ENCODE measurements at regions of chr4 and their contacts with region 1.

Region 1: GRCh38 chr4:73864365-73864764 is 4.8 kb upstream of the CXCL1 start:
- DNase-seq: peak; percentile 32
- H3K4me3 ChIP-seq: no peak overlapping the region
- H3K4me3 Mint-ChIP-seq: no peak overlapping the region
- H3K27ac Mint-ChIP-seq: no peak overlapping the region
- H3K4me1 ChIP-seq: no peaks in the 10 kb centered on the region; the same call in 1 of the 2 replicates
- H3K4me1 Mint-ChIP-seq: no peaks in the 10 kb centered on the region
- H3K27me3 ChIP-seq: no peaks in the 10 kb centered on the region
- H3K27me3 Mint-ChIP-seq: peaks cover 8% of the 10 kb centered on the region
- CTCF ChIP-seq: peak; percentile 52 to 69

Region 2: GRCh38 chr4:73648478-73648877 is 215.9 kb before region 1 on chr4:
- CTCF ChIA-PET with region 1: no interaction called
- POLR2A ChIA-PET with region 1: no interaction called
- intact Hi-C with region 1: no loop called
- DNase-seq: no peak
- H3K4me3 ChIP-seq: no peak overlapping the region
- H3K4me3 Mint-ChIP-seq: no peak overlapping the region
- H3K27ac Mint-ChIP-seq: no peak overlapping the region
- H3K4me1 ChIP-seq: no peaks in the 10 kb centered on the region
- H3K4me1 Mint-ChIP-seq: no peaks in the 10 kb centered on the region
- H3K27me3 ChIP-seq: no peaks in the 10 kb centered on the region
- H3K27me3 Mint-ChIP-seq: no peaks in the 10 kb centered on the region
- CTCF ChIP-seq: no peak

Region 3: DNA sequence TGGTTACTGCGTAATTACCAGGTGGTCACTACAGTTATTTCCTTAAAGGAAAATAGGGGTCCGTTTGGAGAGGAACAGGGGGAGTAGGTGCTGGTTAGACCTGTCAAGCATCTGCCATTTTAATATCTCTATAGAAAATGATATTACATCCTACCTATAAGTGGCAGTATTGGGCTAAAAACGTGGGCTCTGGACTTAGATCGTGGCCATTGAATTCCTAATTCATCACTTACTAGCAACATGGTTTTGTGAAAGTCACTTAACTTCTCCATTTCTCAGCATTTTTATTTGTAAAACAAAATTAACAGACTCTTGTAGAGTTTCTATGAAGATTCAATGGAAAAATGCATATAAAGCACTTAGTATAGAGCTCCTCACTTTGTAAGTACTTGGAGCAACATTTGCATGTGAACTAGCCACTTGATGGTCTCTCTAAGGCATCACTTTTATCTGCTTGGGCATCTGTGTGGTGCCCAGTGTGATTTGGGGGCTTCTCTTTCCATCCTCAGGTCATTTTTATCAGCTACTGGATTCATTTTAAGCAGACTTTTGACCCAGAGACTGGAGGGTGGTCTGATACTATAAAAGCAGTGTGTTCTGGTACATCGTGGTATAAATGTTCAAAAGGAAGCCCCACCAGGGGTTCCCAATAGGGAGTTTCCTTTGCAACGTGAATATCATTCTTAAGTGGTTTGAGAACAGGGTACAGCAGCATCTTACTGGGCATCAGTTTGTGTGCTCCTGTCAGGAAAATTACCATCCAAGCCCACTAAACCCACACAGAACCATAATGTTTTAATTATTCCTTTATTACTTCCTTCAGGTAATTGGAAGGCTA is 201.4 kb before region 1 on chr4:
- CTCF ChIA-PET with region 1: interaction called, 3 read pairs
- POLR2A ChIA-PET with region 1: no interaction called
- intact Hi-C with region 1: loop called (anchors 1 kb)
- DNase-seq: no peak
- H3K4me3 ChIP-seq: no peak overlapping the region
- H3K4me3 Mint-ChIP-seq: no peak overlapping the region
- H3K27ac Mint-ChIP-seq: no peak overlapping the region
- H3K4me1 ChIP-seq: no peaks in the 10 kb centered on the region
- H3K4me1 Mint-ChIP-seq: no peaks in the 10 kb centered on the region
- H3K27me3 ChIP-seq: no peaks in the 10 kb centered on the region
- H3K27me3 Mint-ChIP-seq: no peaks in the 10 kb centered on the region
- CTCF ChIP-seq: peak in 1 of 2 experiments; percentile 19

Region 4: DNA sequence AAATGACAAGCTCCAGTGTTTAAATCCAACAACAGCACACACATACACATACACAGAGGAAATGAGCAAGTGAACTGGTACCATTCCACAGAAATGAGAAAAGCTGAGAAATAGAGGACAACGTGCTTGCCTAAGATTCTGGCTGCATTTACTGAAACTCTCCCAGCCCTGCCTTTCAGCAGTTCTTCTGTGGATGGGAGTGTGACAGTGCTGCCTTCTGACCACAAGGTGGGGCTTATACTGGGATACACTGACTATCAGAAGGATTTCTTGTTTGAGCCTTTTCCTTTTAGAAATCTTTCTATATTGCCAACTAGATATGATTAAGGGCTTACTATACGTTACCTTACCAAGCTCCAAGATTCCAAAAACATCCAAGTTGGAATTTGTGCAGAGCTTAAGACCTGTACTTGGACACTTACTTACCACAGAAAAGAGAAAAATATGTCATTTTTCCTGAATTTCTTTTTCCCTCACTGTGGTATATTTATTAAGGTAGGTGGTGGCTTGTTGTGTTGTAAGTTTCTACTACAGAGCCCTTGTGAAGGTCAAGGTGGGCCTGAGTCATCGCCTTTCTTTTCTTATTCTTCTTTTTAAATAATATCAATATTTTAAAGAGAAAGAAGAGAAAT is 134.7 kb before region 1 on chr4:
- CTCF ChIA-PET with region 1: interaction called, 3 read pairs
- POLR2A ChIA-PET with region 1: no interaction called
- intact Hi-C with region 1: loop called (anchors 1 kb)
- DNase-seq: peak; percentile 57 to 63
- H3K4me3 ChIP-seq: no peak overlapping the region
- H3K4me3 Mint-ChIP-seq: no peak overlapping the region
- H3K27ac Mint-ChIP-seq: no peak overlapping the region
- H3K4me1 ChIP-seq: no peaks in the 10 kb centered on the region; the same call in 1 of the 2 replicates
- H3K4me1 Mint-ChIP-seq: no peaks in the 10 kb centered on the region
- H3K27me3 ChIP-seq: no peaks in the 10 kb centered on the region
- H3K27me3 Mint-ChIP-seq: no peaks in the 10 kb centered on the region
- CTCF ChIP-seq: peak; percentile 79 to 84

Region 5: DNA sequence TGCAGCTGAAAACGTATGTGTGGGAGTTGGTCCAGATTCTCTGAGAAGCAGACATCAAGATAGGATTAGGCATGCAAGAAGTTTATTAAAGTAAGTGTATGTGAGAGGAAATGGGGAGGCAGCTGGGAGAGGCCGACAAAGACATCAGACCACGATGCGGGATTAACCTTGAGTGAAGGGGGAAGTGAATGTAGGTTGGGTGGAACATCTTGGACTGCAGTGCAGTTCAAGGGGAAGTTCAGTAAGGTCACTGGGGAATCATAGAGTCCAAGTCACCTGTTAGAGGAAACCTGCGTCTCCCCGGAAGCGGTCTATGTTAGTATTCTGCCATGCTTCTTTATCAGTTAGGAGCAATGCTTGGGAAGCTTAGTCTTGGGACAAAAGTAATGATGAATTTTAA is 102.0 kb before region 1 on chr4:
- CTCF ChIA-PET with region 1: no interaction called
- POLR2A ChIA-PET with region 1: no interaction called
- intact Hi-C with region 1: no loop called
- DNase-seq: no peak
- H3K4me3 ChIP-seq: no peak overlapping the region
- H3K4me3 Mint-ChIP-seq: no peak overlapping the region
- H3K27ac Mint-ChIP-seq: no peak overlapping the region
- H3K4me1 ChIP-seq: no peaks in the 10 kb centered on the region
- H3K4me1 Mint-ChIP-seq: no peaks in the 10 kb centered on the region
- H3K27me3 ChIP-seq: no peaks in the 10 kb centered on the region
- H3K27me3 Mint-ChIP-seq: peaks cover 4% of the 10 kb centered on the region
- CTCF ChIP-seq: no peak

Measured in Caco-2 (cell line).